ENCODE measurements at regions of chr18 and their contacts with region 1.

Region 1: DNA sequence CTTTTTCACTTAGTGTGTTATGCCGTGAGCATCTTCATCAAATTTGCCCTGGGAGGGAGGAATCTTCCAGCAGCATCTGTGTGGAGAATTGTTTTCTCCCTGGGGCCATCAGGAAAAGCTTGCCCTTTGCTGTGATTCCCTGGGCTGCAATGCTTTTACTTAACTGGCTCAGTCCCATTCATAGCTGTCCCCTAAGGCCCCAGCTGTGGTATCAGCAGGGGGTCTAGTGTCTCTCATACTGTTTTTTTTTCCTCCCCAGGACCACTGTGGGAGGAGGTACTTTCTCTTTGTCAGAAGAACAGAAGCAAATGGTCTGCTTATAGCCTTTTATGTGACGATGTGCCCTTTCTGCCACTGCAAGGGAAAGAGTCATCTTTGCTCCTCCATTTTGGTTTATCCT is 176.8 kb upstream of the CELF4 start:
- DNase-seq: no peak
- H3K4me3 ChIP-seq: no peak overlapping the region
- H3K27ac ChIP-seq: no peak overlapping the region
- H3K4me1 ChIP-seq: no peaks in the 10 kb centered on the region
- H3K27me3 ChIP-seq: no peaks in the 10 kb centered on the region
- CTCF ChIP-seq: no peak

Region 2: DNA sequence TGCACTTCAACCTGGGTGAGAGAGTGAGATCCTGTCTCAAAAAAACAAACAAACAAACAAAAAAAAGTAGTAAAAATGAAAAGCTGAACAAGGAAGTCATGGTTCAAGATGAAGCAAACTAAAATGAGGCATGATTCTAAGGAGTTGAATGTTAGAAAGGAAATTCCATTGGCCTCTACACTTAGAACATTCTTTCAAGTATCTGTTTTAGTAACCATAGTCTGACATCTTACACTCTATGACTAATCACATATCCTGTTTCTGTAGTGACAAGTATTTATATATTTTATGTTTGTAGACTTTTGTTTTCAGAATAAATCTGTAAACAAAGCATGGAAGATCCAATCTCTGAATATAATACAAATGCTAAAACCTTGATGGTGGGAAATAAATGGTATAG is 749.4 kb before region 1 on chr18:
- CTCF ChIA-PET with region 1: no interaction called
- dilution Hi-C with region 1: no loop called
- in situ Hi-C with region 1: no loop called
- intact Hi-C with region 1: no loop called
- DNase-seq: peak; percentile 47
- H3K4me3 ChIP-seq: no peak overlapping the region
- H3K27ac ChIP-seq: no peak overlapping the region
- H3K4me1 ChIP-seq: peaks cover 5% of the 10 kb centered on the region
- H3K27me3 ChIP-seq: no peaks in the 10 kb centered on the region
- CTCF ChIP-seq: no peak

Region 3: DNA sequence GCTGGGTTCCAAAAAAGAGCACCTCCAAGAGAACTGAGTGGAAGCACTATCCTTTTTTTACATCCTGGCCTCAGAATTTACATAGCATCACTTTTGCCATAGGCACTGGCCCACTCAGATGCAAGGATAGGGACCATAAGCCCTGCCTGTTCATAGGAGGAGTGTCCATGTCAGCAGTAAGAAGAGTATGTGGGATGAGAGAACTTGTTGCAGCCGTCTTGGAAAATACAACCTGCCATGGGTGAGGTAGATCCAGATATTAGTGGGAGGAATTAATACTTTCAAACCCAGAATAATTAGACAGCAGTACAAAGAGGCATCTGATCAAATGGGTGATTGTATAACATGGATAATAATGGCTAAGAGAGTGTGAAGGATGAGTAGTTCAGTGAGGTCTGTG is 66.2 kb before region 1 on chr18:
- CTCF ChIA-PET with region 1: no interaction called
- dilution Hi-C with region 1: loop called (anchors 5 kb)
- in situ Hi-C with region 1: no loop called
- intact Hi-C with region 1: no loop called
- DNase-seq: no peak
- H3K4me3 ChIP-seq: no peak overlapping the region
- H3K27ac ChIP-seq: no peak overlapping the region
- H3K4me1 ChIP-seq: no peaks in the 10 kb centered on the region
- H3K27me3 ChIP-seq: peaks cover 2% of the 10 kb centered on the region
- CTCF ChIP-seq: no peak